ENCODE measurements at regions of chr2 and their contacts with region 1.

Region 1: GRCh38 chr2:58089081-58089480 is 42.5 kb downstream of the VRK2 start:
- DNase-seq: peak; percentile 37
- ATAC-seq: peak; percentile 60
- H3K4me3 ChIP-seq: no peak overlapping the region
- H3K27ac ChIP-seq: no peak overlapping the region
- H3K4me1 ChIP-seq: no peaks in the 10 kb centered on the region
- H3K27me3 ChIP-seq: no peaks in the 10 kb centered on the region
- CTCF ChIP-seq: no peak
- POLR2A ChIP-seq: no peak
- RAD21 ChIP-seq: no peak

Region 2: DNA sequence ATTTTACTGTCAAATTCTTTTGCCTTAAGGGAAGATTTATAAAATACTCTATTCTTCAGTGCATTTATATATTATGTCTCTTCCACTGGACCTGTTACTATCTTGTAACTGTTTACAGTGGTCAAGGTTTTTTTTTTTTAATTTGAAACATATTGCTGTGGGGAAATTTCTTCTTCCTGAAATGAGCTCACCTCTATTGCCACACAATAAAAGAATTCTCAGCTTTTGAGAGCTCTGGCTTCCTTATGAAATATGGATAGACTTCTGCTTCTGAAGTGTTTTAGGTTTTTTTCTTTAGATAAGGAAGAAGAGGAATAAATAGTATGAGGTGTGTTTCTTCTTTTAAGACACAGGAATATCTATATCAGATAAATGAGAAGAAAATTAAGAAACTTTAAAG is 34.8 kb before region 1 on chr2:
- CTCF ChIA-PET with region 1: no interaction called
- POLR2A ChIA-PET with region 1: no interaction called
- dilution Hi-C with region 1: no loop called
- in situ Hi-C with region 1: no loop called
- intact Hi-C with region 1: no loop called
- DNase-seq: peak; percentile 47
- ATAC-seq: no peak
- H3K4me3 ChIP-seq: no peak overlapping the region
- H3K27ac ChIP-seq: no peak overlapping the region
- H3K4me1 ChIP-seq: no peaks in the 10 kb centered on the region
- H3K27me3 ChIP-seq: no peaks in the 10 kb centered on the region
- CTCF ChIP-seq: no peak
- POLR2A ChIP-seq: no peak
- RAD21 ChIP-seq: no peak

Region 3: DNA sequence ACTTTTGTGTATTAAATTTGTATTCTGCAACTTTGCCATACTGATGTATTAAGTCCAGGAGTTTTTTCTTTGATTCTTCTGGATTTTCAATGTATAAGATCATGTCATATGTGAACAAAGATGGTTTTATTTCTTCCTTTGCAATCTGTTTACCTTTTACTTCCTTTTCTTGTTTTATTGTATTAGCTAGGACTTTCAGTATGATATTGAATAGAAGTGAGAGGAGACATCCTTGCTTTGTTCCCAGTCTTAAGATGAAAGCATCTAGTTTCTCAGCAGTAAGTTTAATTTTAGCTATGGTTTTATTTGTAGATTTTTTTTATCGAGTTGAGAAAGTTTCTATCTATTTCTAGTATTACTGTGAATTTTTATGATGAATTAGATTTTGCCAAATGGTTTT is 17.0 kb before region 1 on chr2:
- CTCF ChIA-PET with region 1: interaction called, 7 read pairs
- POLR2A ChIA-PET with region 1: no interaction called
- dilution Hi-C with region 1: no loop called
- in situ Hi-C with region 1: no loop called
- intact Hi-C with region 1: loop called (anchors 2 kb)
- DNase-seq: no peak
- ATAC-seq: no peak
- H3K4me3 ChIP-seq: no peak overlapping the region
- H3K27ac ChIP-seq: no peak overlapping the region
- H3K4me1 ChIP-seq: no peaks in the 10 kb centered on the region
- H3K27me3 ChIP-seq: no peaks in the 10 kb centered on the region
- CTCF ChIP-seq: no peak
- POLR2A ChIP-seq: no peak
- RAD21 ChIP-seq: no peak

Measured in IMR-90 (cell line).